Activated naive CD4-positive, alpha-beta T cell treated with anti-CD3 and anti-CD28 coated beads, Interleukin-2, amount 10 ng/mL, durations not matched to agents 7 days and 5 days (primary cell): ENCODE measurements at regions of chr4 and their contacts with region 1.

Region 1: GRCh38 chr4:83110223-83110945 is 4.1 kb downstream of the PLAC8 start:
- DNase-seq: peak; percentile 94
- H3K4me3 Mint-ChIP-seq: peak overlapping the region; percentile 93
- H3K27ac Mint-ChIP-seq: peak overlapping the region; percentile 95
- H3K4me1 Mint-ChIP-seq: peaks cover 43% of the 10 kb centered on the region
- H3K27me3 Mint-ChIP-seq: no peaks in the 10 kb centered on the region

Region 2: GRCh38 chr4:83083925-83084475 is 26.4 kb before region 1 on chr4:
- CTCF ChIA-PET with region 1: interaction called, 11 read pairs
- DNase-seq: peak; percentile 80
- H3K4me3 Mint-ChIP-seq: no peak overlapping the region
- H3K27ac Mint-ChIP-seq: peak overlapping the region; percentile 91
- H3K4me1 Mint-ChIP-seq: peaks cover 53% of the 10 kb centered on the region
- H3K27me3 Mint-ChIP-seq: no peaks in the 10 kb centered on the region

Region 3: GRCh38 chr4:83217721-83218522 is 107.5 kb after region 1 on chr4:
- CTCF ChIA-PET with region 1: interaction called, 25 read pairs
- DNase-seq: peak; percentile 83
- H3K4me3 Mint-ChIP-seq: peak overlapping the region; percentile 71
- H3K27ac Mint-ChIP-seq: peak overlapping the region; percentile 96
- H3K4me1 Mint-ChIP-seq: peaks cover 89% of the 10 kb centered on the region
- H3K27me3 Mint-ChIP-seq: no peaks in the 10 kb centered on the region

Region 4: DNA sequence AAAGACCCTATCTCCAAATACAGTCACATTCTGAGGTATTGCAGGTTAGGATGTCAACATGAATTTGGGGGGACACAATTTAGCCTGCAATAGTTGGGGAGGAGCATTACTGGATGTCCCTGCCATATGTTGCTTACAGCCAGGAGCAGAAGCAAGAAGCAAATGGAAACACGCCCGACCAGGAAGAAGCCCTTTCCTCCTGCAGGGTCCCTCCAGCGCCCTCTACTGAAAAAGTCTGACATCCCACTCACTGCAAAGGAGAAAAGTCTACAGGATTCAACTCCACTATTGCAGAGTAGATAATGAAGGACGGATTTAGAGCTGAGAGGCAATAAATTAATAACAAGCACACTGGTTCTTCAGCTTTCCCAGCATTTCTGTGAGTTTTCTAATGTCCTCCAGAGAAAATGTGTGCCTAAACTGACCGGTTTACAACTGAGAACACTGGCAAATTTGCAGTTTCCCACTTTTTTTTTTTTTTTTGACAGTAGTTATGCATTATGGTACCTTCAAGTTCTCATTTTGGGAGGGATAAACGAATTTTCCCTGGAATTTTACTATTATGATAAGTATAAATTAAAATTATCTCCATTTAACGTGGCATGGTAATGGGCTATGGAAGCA is 142.5 kb after region 1 on chr4:
- CTCF ChIA-PET with region 1: interaction called, 70 read pairs
- DNase-seq: peak; percentile 87
- H3K4me3 Mint-ChIP-seq: no peak overlapping the region
- H3K27ac Mint-ChIP-seq: no peak overlapping the region
- H3K4me1 Mint-ChIP-seq: peaks cover 38% of the 10 kb centered on the region
- H3K27me3 Mint-ChIP-seq: no peaks in the 10 kb centered on the region

Region 5: DNA sequence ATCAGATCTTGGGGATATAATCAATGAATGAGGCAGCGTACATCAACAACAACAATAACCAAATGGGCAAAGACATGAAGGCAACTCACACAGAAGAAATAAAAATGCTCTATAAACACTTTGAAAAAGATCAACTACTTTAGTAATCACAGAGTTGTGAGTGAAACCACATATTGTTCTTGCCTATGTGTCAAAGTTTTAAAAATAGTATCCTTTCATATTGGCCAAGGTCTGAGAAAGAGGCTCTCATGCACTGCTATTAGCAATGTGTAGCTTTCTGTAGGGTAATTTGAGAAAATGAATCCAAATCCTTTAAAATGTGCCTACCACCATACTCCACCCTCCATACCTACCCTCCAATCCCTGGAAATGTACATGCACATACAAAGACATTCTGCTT is 149.2 kb after region 1 on chr4:
- CTCF ChIA-PET with region 1: interaction called, 70 read pairs
- DNase-seq: no peak
- H3K4me3 Mint-ChIP-seq: no peak overlapping the region
- H3K27ac Mint-ChIP-seq: no peak overlapping the region
- H3K4me1 Mint-ChIP-seq: peaks cover 18% of the 10 kb centered on the region
- H3K27me3 Mint-ChIP-seq: no peaks in the 10 kb centered on the region